ENCODE measurements at regions of chr3 and their contacts with region 1.

Region 1: DNA sequence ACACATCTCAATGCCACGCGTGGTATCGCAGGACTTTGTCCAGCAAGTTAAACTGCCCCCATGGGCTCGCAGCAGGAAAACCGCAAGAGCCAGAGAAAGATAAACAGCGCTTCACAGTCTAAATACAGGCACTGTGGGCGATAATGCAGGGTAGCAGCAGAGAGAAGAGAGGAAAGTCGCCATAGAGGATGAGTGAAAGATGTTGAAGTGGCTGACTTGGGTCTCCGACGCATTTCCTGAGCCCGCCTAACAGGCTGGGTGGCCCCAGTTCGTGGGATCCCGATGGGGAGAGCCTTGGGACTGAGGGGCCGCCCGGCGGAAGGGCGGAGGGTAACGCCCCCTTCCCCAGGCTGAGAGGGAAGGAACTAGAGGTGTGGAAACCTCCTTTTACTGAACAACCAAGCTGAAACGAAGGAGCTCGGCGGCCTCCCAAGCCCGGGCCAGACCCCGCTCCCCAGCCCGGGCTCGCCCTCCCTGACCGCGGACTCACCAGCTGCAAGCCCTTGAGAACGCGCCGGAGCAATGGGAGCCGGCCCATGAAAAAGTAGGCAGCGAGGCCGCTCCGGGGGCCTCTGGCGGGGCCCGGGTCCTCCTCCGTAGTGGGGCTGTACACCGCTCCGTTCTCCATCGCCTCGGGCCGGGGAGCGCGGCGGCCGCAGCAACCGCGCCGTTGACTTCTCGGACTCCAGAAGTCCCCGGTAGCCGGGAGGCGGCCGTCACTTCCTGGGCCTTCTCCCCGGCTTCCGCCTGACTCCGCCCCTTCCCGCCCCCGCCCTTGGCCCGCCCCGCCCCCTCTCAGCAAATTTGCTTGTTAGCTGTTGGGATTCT is at the start of gene CMTM6:
- DNase-seq: peak; percentile 94
- total RNA-seq, gene CMTM6: 31.7 to 32.0 TPM

Region 2: DNA sequence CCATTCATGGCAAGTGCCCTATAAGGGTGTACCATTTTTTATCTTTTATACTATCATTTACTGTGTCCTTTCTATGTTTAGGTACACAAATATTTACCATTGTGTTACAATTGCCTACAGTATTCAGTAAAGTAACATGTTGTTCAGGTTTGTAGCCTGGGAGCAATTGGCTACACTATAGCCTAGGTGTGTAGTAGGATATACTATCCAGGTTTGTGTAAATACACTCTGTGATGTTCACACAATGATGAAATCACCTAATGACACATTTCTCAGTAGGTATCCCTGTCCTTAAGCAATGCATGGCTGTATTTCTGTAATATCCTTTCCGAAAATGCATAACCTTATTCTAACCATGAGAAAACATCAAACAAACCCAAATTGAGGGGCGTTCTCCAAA is 164.8 kb after region 1 on chr3:
- intact Hi-C with region 1: loop called in 1 of 2 experiments (anchors 5 kb)
- DNase-seq: no peak

Measured in posterior vena cava (tissue), 2 donors.